ENCODE measurements at regions of chr10 and their contacts with region 1.

Region 1: DNA sequence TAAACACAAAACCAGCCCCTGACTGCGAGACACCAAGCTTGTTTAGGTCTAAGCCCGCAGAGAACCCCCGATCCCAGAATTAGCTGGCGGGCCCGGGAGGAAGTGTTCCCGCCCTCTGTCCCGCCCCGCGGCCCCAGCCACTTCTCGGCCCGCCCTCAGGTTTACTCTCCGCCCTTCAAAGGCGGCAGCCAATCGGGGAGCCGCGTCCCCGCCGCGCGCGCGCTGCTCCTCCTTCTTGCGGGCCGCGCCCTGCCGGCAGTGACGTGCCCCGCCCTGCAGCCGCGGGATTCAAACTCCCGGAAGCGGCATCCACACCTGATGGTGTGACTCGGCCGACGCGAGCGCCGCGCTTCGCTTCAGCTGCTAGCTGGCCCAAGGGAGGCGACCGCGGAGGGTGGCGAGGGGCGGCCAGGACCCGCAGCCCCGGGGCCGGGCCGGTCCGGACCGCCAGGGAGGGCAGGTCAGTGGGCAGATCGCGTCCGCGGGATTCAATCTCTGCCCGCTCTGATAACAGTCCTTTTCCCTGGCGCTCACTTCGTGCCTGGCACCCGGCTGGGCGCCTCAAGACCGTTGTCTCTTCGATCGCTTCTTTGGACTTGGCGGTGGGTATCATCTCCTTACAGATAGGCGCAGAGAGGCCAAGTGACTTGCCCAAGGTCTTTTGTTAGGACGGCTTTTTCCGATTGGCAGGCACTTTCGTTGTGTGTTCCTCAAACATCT is at the start of gene CEP55:
- DNase-seq: peak; percentile 95
- H3K4me3 Mint-ChIP-seq: peak within 1 kb of the TSS; percentile 97
- H3K27ac Mint-ChIP-seq: peak within 1 kb of the TSS; percentile 96
- H3K4me1 Mint-ChIP-seq: peaks cover 54% of the 10 kb centered on the region
- H3K27me3 Mint-ChIP-seq: no peaks in the 10 kb centered on the region
- total RNA-seq, gene CEP55: 72.6 and 76.1 TPM in 2 replicates

Region 2: DNA sequence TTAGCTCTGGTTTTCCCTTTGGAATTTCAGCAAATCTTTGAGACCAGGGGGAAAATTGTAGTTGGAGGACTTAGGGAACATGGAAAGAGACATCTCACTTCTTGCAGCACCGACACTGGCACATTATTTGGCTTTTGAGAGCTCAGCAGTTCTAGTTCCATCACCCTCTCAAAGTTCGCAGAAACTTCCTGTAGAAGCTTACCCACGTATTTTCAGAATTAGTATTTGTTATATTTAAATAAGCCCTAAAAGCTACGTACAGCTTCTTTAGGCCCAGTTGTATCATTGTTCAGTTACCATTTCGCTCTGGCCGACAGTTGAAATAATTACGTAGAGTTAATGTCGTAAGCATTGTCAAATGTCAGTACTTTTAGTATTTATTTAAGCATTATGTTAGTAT is 13.3 kb after region 1 on chr10:
- intact Hi-C with region 1: loop called (anchors 2 kb)
- DNase-seq: no peak
- H3K4me3 Mint-ChIP-seq: no peak overlapping the region
- H3K27ac Mint-ChIP-seq: peak overlapping the region; percentile 51
- H3K4me1 Mint-ChIP-seq: peaks cover 42% of the 10 kb centered on the region
- H3K27me3 Mint-ChIP-seq: no peaks in the 10 kb centered on the region

Region 3: GRCh38 chr10:93566435-93567276 is 70.2 kb after region 1 on chr10 and contains the start of gene FFAR4:
- intact Hi-C with region 1: no loop called
- DNase-seq: no peak
- H3K4me3 Mint-ChIP-seq: no peak within 1 kb of the TSS
- H3K27ac Mint-ChIP-seq: no peak within 1 kb of the TSS
- H3K4me1 Mint-ChIP-seq: no peaks in the 10 kb centered on the region
- H3K27me3 Mint-ChIP-seq: peaks cover 56% of the 10 kb centered on the region
- total RNA-seq, gene FFAR4: not detected in 2 replicates

Region 4: GRCh38 chr10:93873427-93874115 is 377.1 kb after region 1 on chr10:
- intact Hi-C with region 1: no loop called
- DNase-seq: no peak
- H3K4me3 Mint-ChIP-seq: no peak overlapping the region
- H3K27ac Mint-ChIP-seq: no peak overlapping the region
- H3K4me1 Mint-ChIP-seq: no peaks in the 10 kb centered on the region
- H3K27me3 Mint-ChIP-seq: peaks cover 26% of the 10 kb centered on the region

Measured in activated T-helper 2 cell treated with anti-CD3 and anti-CD28 coated beads, Interferon-gamma antibody, Interleukin-2, Interleukin-4, amounts not matched to agents 10 μg/mL and 5 μg/mL and 100 μg/mL, durations not matched to agents 14 hours and 24 hours and 36 hours (primary cell).